ENCODE measurements at regions of chr19 and their contacts with region 1.

Region 1: GRCh38 chr19:5585461-5586299 is 17.9 kb upstream of the TINCR start:
- DNase-seq: no peak
- H3K4me3 ChIP-seq: no peak overlapping the region
- CTCF ChIP-seq: no peak

Region 2: GRCh38 chr19:5057861-5058260 is 527.8 kb before region 1 on chr19:
- in situ Hi-C with region 1: loop called (anchors 10 kb)
- DNase-seq: no peak
- H3K4me3 ChIP-seq: no peak overlapping the region
- CTCF ChIP-seq: no peak

Measured in astrocyte of the cerebellum (primary cell).